MCF 10A (cell line): ENCODE measurements at regions of chr1 and their contacts with region 1.

Region 1: GRCh38 chr1:167687919-167688519 is 33.8 kb upstream of the MPZL1 start:
- DNase-seq: peak; percentile 93
- H3K4me3 Mint-ChIP-seq: no peak overlapping the region
- H3K27ac Mint-ChIP-seq: no peak overlapping the region
- H3K4me1 Mint-ChIP-seq: peaks cover 26% of the 10 kb centered on the region
- H3K27me3 Mint-ChIP-seq: no peaks in the 10 kb centered on the region
- CTCF ChIP-seq: peak; percentile 97

Region 2: GRCh38 chr1:167229719-167230385 is 458.2 kb before region 1 on chr1:
- CTCF ChIA-PET with region 1: interaction called, 10 read pairs
- POLR2A ChIA-PET with region 1: no interaction called
- intact Hi-C with region 1: no loop called
- DNase-seq: no peak
- H3K4me3 Mint-ChIP-seq: no peak overlapping the region
- H3K27ac Mint-ChIP-seq: no peak overlapping the region
- H3K4me1 Mint-ChIP-seq: peaks cover 20% of the 10 kb centered on the region
- H3K27me3 Mint-ChIP-seq: no peaks in the 10 kb centered on the region
- CTCF ChIP-seq: no peak

Region 3: GRCh38 chr1:167553136-167554027 is 134.6 kb before region 1 on chr1 and contains the start of gene CREG1:
- CTCF ChIA-PET with region 1: interaction called, 38 read pairs
- POLR2A ChIA-PET with region 1: interaction called, 10 read pairs
- intact Hi-C with region 1: loop called (anchors 2 kb)
- DNase-seq: peak; percentile 98
- H3K4me3 Mint-ChIP-seq: peak within 1 kb of the TSS; percentile 87
- H3K27ac Mint-ChIP-seq: peak within 1 kb of the TSS; percentile 36
- H3K4me1 Mint-ChIP-seq: peaks cover 59% of the 10 kb centered on the region
- H3K27me3 Mint-ChIP-seq: no peaks in the 10 kb centered on the region
- CTCF ChIP-seq: no peak
- total RNA-seq, gene CREG1: 136 and 154 TPM in 2 replicates

Region 4: DNA sequence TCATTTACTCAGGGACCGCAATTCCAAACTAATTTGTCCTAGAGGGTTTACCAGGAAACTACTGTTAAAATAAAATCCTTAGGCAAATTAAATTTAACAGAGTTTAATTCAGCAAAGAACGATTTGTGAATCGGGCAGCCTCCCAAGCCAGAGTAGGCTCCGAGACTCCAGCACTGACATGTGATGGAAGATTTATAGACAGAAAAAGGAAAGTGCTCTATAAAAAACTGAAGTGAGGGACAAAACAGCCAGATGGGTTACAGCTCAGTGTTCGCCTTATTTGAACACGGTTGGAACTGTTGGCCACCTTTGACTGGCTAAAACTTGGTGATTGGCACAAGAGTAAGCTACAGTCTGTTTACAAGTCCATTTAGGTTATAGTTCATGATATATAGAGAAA is 93.2 kb before region 1 on chr1:
- CTCF ChIA-PET with region 1: interaction called, 400 read pairs
- POLR2A ChIA-PET with region 1: interaction called, 52 read pairs
- intact Hi-C with region 1: loop called (anchors 1 kb)
- DNase-seq: no peak
- H3K4me3 Mint-ChIP-seq: no peak overlapping the region
- H3K27ac Mint-ChIP-seq: no peak overlapping the region
- H3K4me1 Mint-ChIP-seq: peaks cover 11% of the 10 kb centered on the region
- H3K27me3 Mint-ChIP-seq: no peaks in the 10 kb centered on the region
- CTCF ChIP-seq: no peak

Region 5: GRCh38 chr1:167627865-167628641 is 60.0 kb before region 1 on chr1:
- CTCF ChIA-PET with region 1: interaction called, 23 read pairs
- POLR2A ChIA-PET with region 1: no interaction called
- intact Hi-C with region 1: no loop called
- DNase-seq: no peak
- H3K4me3 Mint-ChIP-seq: no peak overlapping the region
- H3K27ac Mint-ChIP-seq: peak overlapping the region; percentile 65
- H3K4me1 Mint-ChIP-seq: peaks cover 13% of the 10 kb centered on the region
- H3K27me3 Mint-ChIP-seq: no peaks in the 10 kb centered on the region
- CTCF ChIP-seq: no peak

Region 6: GRCh38 chr1:167676205-167676915 is 11.7 kb before region 1 on chr1:
- CTCF ChIA-PET with region 1: interaction called, 69 read pairs
- POLR2A ChIA-PET with region 1: interaction called, 7 read pairs
- intact Hi-C with region 1: no loop called
- DNase-seq: no peak
- H3K4me3 Mint-ChIP-seq: no peak overlapping the region
- H3K27ac Mint-ChIP-seq: no peak overlapping the region
- H3K4me1 Mint-ChIP-seq: peaks cover 12% of the 10 kb centered on the region
- H3K27me3 Mint-ChIP-seq: no peaks in the 10 kb centered on the region
- CTCF ChIP-seq: no peak

Region 7: DNA sequence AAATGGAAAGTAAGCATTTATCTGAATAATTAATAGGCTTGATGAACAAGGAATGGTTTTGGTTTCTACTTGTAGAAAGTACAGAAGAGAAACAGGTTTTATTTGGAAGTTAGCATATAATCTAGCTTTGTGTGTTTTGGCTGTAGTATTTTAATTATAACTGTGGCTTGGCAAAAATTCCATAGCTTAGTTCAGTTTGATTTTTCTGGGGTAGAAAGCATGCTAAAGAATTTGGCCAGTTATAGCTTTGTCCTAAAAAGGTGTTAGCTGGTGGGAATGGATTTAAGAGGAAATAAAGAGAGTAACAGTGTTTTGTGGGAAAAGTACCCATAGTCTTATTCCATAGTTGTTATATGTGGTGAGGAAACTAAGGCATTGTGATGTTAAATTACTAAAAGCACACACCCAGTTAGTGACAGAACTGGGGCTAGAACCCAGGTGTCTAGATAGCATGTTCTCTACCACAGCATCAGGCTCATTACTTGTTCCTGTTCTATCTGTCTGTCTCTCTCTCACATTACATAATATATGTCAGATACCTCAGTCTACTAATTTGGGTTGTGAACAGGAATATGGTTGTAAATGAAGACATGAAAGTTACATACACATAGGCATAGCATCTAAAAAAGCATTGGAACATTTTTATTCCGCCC is 88.7 kb after region 1 on chr1:
- CTCF ChIA-PET with region 1: no interaction called
- POLR2A ChIA-PET with region 1: no interaction called
- intact Hi-C with region 1: no loop called
- DNase-seq: no peak
- H3K4me3 Mint-ChIP-seq: no peak overlapping the region
- H3K27ac Mint-ChIP-seq: peak overlapping the region; percentile 0
- H3K4me1 Mint-ChIP-seq: peaks cover 25% of the 10 kb centered on the region
- H3K27me3 Mint-ChIP-seq: no peaks in the 10 kb centered on the region
- CTCF ChIP-seq: no peak

Region 8: DNA sequence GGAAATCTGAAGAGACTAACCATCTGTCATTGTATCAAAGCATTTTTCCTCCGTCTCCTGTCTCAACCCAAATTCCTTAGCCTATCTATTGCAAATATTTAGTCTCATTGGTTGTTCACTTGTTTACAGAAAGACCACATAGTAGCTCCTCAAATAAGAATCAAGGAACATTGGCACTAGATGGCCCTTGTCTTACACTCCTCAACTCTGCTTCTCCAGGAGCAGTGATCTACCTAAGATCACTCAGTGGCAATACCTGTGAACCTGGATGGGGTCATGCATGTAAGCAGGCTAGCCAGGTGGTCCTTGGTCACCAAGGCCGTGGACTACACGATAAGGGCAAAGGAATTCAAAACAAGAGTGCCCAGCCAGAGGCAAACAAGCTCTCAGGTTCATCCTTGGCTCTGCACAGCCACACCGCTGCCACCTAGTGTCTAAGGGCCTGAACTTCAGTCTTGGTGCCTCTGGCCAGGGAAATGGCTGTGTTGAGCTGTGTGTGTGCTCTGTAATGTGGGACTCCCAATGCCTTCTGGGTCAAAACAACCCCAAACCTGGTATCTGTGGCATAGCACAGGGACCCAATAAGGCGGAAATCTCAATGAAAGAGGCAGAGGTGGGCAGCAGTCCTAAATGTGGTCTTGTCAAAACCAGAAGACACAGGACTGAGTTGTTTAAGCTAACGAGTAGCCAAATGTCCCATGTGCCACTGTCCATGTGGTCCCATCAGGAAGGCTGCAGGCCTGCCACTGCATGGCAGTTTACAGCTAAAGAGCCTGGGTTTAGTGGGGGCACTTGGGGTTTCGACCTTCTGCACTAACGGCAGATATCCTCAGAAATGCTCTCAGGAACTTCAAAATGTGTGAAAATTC is 394.2 kb after region 1 on chr1:
- CTCF ChIA-PET with region 1: interaction called, 12 read pairs
- POLR2A ChIA-PET with region 1: no interaction called
- intact Hi-C with region 1: no loop called
- DNase-seq: peak; percentile 88
- H3K4me3 Mint-ChIP-seq: no peak overlapping the region
- H3K27ac Mint-ChIP-seq: peak overlapping the region; percentile 82
- H3K4me1 Mint-ChIP-seq: peaks cover 28% of the 10 kb centered on the region
- H3K27me3 Mint-ChIP-seq: no peaks in the 10 kb centered on the region
- CTCF ChIP-seq: peak; percentile 95